WTC11 (cell line): ENCODE measurements at regions of chr16 and their contacts with region 1.

Region 1: DNA sequence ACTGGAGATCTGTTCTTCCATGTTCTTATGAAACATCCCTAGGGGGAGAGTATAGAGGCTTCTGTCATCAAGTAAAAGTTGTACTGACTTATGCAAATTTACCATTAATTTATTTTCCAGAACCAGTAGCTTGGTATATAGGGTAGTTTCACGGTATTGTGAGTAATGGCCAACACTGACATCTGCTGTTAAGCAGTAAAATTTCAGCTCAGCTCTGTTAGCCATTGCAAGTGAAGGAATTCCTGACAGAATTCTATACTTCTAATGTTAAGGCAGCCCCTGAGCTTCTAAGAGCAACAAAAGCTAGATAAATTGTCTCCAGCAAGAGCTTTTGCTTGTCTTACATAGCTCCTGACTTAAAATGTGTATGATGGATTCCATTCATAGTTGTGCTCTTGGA is 613.5 kb upstream of the C16orf82 start:
- DNase-seq: no peak
- ATAC-seq: no peak; the same call in 1 of the 2 replicates
- H3K4me3 Mint-ChIP-seq: no peak overlapping the region
- H3K27ac Mint-ChIP-seq: no peak overlapping the region
- H3K4me1 Mint-ChIP-seq: peaks cover 3% of the 10 kb centered on the region; the same call in 1 of the 2 replicates
- H3K27me3 Mint-ChIP-seq: no peaks in the 10 kb centered on the region
- CTCF ChIP-seq: no peak

Region 2: DNA sequence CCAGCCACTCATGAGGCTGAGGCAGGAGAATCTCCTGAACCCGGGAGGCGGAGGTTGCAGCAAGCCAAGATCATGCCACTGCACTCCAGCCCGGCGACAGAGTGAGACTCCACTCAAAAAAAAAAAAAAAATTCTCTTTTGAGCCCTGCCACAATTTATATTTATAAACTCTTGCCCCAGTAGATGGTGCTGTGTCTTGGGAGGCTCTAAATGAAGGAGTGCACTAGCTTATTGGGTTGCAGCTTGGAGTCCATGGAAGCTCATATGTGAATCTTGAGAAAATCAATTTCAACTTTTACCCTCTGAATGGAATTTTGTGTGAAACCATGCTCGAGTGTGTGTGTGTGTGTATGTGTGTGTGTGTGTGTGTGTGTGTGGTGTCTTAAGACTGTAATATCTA is 341.3 kb before region 1 on chr16:
- CTCF ChIA-PET with region 1: interaction called, 12 read pairs
- POLR2A ChIA-PET with region 1: no interaction called
- DNase-seq: no peak
- ATAC-seq: peak; percentile 62
- H3K4me3 Mint-ChIP-seq: no peak overlapping the region
- H3K27ac Mint-ChIP-seq: no peak overlapping the region
- H3K4me1 Mint-ChIP-seq: peaks cover 10% of the 10 kb centered on the region; the same call in 1 of the 2 replicates
- H3K27me3 Mint-ChIP-seq: no peaks in the 10 kb centered on the region
- CTCF ChIP-seq: no peak

Region 3: GRCh38 chr16:26493751-26494150 is 40.5 kb after region 1 on chr16:
- CTCF ChIA-PET with region 1: no interaction called
- POLR2A ChIA-PET with region 1: no interaction called
- DNase-seq: no peak
- ATAC-seq: no peak
- H3K4me3 Mint-ChIP-seq: no peak overlapping the region; the same call in 1 of the 2 replicates
- H3K27ac Mint-ChIP-seq: no peak overlapping the region
- H3K4me1 Mint-ChIP-seq: peaks cover 42% of the 10 kb centered on the region
- H3K27me3 Mint-ChIP-seq: no peaks in the 10 kb centered on the region
- CTCF ChIP-seq: no peak